ENCODE measurements at regions of chr1 and their contacts with region 1.

Region 1: GRCh38 chr1:205598841-205599668 is 32.8 kb downstream of the ELK4 start:
- DNase-seq: peak; percentile 79 to 88 (median 84)
- ATAC-seq: peak; percentile 67 to 91 (median 90)
- H3K4me3 ChIP-seq: peak overlapping the region in 2 of 12 donors; percentile 2 to 10
- H3K27ac ChIP-seq: peak overlapping the region; percentile 22 to 76 (median 64)
- H3K4me1 ChIP-seq: peaks cover 3 to 45% (median 27%) of the 10 kb centered on the region in 12 donors
- H3K27me3 ChIP-seq: no peaks in the 10 kb centered on the region
- CTCF ChIP-seq: no peak
- POLR2A ChIP-seq: no peak

Region 2: GRCh38 chr1:205631727-205632373 is 32.8 kb after region 1 on chr1 and contains the start of gene ELK4:
- intact Hi-C with region 1: loop called in 3 of 10 experiments (anchors 5 kb)
- DNase-seq: peak; percentile 99 to 100 (median 99)
- ATAC-seq: peak; percentile 99 to 100 (median 99)
- H3K4me3 ChIP-seq: peak within 1 kb of the TSS; percentile 47 to 88 (median 74)
- H3K27ac ChIP-seq: peak within 1 kb of the TSS; percentile 89 to 97 (median 95)
- H3K4me1 ChIP-seq: peaks cover 4 to 50% (median 22%) of the 10 kb centered on the region in 12 donors
- H3K27me3 ChIP-seq: no peaks in the 10 kb centered on the region
- CTCF ChIP-seq: peak; percentile 67 to 92 (median 76)
- POLR2A ChIP-seq: peak in 1 of 2 donors; percentile 97
- total RNA-seq, gene ELK4: 18.5 to 54.9 (median 36.5) TPM

Region 3: DNA sequence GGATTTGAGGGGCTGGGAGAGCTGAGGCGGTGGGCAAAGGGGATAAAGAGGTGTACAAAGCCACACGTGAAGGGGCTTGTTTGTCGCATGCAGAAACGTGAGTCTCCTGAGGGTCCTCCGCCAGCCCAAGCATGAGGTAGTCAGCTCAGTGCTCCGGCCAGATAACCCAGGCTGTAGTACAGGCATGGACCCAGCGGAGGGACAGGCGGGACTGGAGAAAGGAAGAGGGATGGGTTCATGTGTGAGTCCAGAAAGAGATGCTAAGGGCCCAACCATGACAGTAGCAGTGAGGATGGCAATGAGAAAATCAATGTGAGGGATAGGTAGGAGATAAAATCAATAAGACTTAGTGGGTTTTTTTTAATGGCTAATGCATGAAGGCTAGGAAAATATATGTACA is 46.5 kb after region 1 on chr1:
- intact Hi-C with region 1: loop called in 1 of 10 experiments (anchors 5 kb)
- DNase-seq: no peak
- ATAC-seq: no peak
- H3K4me3 ChIP-seq: no peak overlapping the region
- H3K27ac ChIP-seq: no peak overlapping the region
- H3K4me1 ChIP-seq: peaks cover 0 to 5% (median 0%) of the 10 kb centered on the region in 12 donors
- H3K27me3 ChIP-seq: no peaks in the 10 kb centered on the region
- CTCF ChIP-seq: no peak
- POLR2A ChIP-seq: no peak